Activated CD4-positive, alpha-beta T cell treated with anti-CD3 and anti-CD28 coated beads for 36 hours (primary cell): ENCODE measurements at regions of chr17 and their contacts with region 1.

Region 1: GRCh38 chr17:43388359-43389045 is 10.3 kb upstream of the ARL4D start:
- DNase-seq: peak; percentile 95
- ATAC-seq: peak; percentile 82
- H3K4me3 Mint-ChIP-seq: peak overlapping the region; percentile 80
- H3K27ac Mint-ChIP-seq: peak overlapping the region; percentile 98
- H3K4me1 Mint-ChIP-seq: peaks cover 16% of the 10 kb centered on the region
- H3K27me3 Mint-ChIP-seq: no peaks in the 10 kb centered on the region

Region 2: GRCh38 chr17:43024407-43025289 is 363.9 kb before region 1 on chr17 and contains the start of gene RND2:
- CTCF ChIA-PET with region 1: no interaction called
- POLR2A ChIA-PET with region 1: no interaction called
- intact Hi-C with region 1: loop called in 1 of 2 experiments (anchors 2 kb)
- DNase-seq: peak; percentile 89
- ATAC-seq: peak; percentile 68
- H3K4me3 Mint-ChIP-seq: peak within 1 kb of the TSS; percentile 78
- H3K27ac Mint-ChIP-seq: peak within 1 kb of the TSS; percentile 71
- H3K4me1 Mint-ChIP-seq: peaks cover 26% of the 10 kb centered on the region
- H3K27me3 Mint-ChIP-seq: no peaks in the 10 kb centered on the region
- total RNA-seq, gene RND2: 0.05 to 0.16 TPM

Region 3: GRCh38 chr17:43068570-43069367 is 319.7 kb before region 1 on chr17:
- CTCF ChIA-PET with region 1: no interaction called
- POLR2A ChIA-PET with region 1: no interaction called
- intact Hi-C with region 1: no loop called
- DNase-seq: no peak
- ATAC-seq: no peak
- H3K4me3 Mint-ChIP-seq: no peak overlapping the region
- H3K27ac Mint-ChIP-seq: no peak overlapping the region
- H3K4me1 Mint-ChIP-seq: no peaks in the 10 kb centered on the region
- H3K27me3 Mint-ChIP-seq: no peaks in the 10 kb centered on the region

Region 4: DNA sequence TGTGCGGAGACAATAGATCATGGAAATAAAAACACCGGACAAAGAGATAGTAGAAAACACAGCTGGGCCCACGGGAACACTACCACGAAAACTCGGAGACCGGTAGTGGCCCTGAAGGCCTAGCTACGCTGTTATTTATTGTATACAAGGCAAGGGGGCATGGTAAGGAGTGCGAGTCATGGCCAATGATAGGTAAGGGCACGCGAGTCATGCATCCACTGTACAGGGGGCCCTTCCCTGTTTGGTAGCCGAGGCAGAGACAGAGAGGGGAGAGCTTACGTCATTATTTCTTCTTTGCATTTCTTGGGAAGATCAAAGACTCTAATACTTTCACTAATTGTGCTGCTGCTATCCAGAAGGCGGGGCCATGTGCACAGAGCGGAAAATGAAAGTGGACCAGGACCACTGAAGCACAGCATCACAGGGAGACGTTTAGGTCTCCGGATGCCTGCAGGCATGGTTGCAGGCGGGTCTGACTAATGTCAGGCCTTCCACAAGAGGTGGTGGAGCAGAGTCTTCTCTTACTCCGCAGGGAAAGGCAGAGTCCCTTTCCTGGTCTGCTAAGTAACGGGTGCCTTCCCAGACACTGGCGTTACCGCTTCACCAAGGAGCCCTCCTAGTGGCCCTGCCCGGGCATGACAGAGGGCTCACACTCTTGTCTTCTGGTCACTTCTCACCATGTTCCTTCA is 64.2 kb before region 1 on chr17:
- CTCF ChIA-PET with region 1: no interaction called
- POLR2A ChIA-PET with region 1: no interaction called
- intact Hi-C with region 1: no loop called
- DNase-seq: no peak
- ATAC-seq: peak; percentile 47
- H3K4me3 Mint-ChIP-seq: no peak overlapping the region
- H3K27ac Mint-ChIP-seq: no peak overlapping the region
- H3K4me1 Mint-ChIP-seq: peaks cover 12% of the 10 kb centered on the region
- H3K27me3 Mint-ChIP-seq: peaks cover 15% of the 10 kb centered on the region

Region 5: GRCh38 chr17:43360739-43361505 is 27.6 kb before region 1 on chr17:
- CTCF ChIA-PET with region 1: interaction called, 6 read pairs
- POLR2A ChIA-PET with region 1: interaction called, 30 read pairs
- intact Hi-C with region 1: no loop called
- DNase-seq: peak; percentile 86
- ATAC-seq: peak; percentile 87
- H3K4me3 Mint-ChIP-seq: peak overlapping the region; percentile 90
- H3K27ac Mint-ChIP-seq: peak overlapping the region; percentile 100
- H3K4me1 Mint-ChIP-seq: peaks cover 31% of the 10 kb centered on the region
- H3K27me3 Mint-ChIP-seq: peaks cover 4% of the 10 kb centered on the region

Region 6: DNA sequence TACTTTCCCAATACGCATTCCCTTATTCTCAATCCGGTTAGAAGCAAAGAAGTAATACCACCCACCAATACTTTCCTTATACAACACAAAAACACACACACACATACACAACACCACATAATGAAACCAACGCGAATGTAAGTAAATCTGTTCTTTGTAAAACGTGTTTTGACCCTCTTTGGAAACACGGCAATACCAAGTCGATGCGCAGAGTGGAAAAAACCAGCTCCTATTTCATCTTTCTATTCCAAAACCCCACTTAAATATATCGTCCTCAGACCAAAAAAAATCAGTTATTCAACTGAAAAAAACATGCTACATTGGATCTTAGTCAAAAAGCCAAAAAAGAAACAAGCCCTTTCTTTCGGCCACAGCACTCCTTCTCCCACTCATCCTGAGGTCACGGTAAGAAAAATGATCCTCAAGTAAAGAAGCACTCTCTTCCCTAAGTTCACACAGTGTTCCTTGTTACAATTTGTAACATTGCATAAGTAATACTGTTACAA is 20.7 kb before region 1 on chr17:
- CTCF ChIA-PET with region 1: interaction called, 9 read pairs
- POLR2A ChIA-PET with region 1: interaction called, 148 read pairs
- intact Hi-C with region 1: loop called (anchors 1 kb)
- DNase-seq: peak; percentile 62
- ATAC-seq: peak; percentile 53
- H3K4me3 Mint-ChIP-seq: peak overlapping the region; percentile 85
- H3K27ac Mint-ChIP-seq: peak overlapping the region; percentile 100
- H3K4me1 Mint-ChIP-seq: peaks cover 57% of the 10 kb centered on the region
- H3K27me3 Mint-ChIP-seq: no peaks in the 10 kb centered on the region

Region 7: DNA sequence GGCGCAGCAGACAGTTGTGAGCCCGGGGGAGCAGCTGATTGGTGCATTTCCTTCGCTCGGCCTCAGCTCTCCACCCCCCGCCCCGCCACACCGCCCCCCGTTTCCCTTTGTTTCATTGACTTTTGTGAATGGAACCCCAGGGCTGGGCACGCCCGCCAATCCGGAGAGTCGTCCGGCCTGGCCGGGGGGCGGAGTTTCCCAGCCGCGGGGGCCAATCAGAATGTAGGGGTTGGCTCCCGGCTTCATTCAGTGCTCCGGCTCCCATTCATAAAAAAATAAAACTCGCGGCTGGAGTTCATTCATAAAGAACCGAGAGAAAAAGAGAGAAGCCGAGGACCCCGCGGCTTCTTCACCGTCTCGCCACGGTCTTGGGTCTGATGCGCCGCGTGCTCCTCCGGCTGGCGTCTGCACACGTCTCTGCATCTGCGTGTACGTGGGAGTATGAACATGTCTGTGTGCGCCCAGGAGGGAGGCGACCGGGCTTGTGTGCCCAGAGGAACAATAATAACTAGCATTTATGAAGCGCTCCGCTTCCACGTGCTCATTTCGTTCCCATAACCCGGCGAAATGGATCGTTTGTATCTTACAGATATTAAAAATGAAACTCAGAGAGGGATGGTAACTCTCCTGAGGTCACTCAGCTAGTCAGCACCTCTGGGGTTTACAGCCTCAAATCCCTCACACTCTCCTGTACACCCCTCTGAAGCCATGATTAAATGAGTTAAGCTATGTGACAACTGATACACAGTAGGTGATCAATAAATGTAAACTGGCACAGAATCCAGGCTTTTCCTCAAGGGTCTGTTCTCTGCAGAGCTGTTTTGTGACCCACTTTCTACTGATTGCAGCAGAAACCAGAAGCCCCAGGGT is 158.1 kb after region 1 on chr17 and contains the start of gene ETV4:
- CTCF ChIA-PET with region 1: interaction called, 3 read pairs
- POLR2A ChIA-PET with region 1: no interaction called
- intact Hi-C with region 1: loop called in 1 of 2 experiments (anchors 2 kb)
- DNase-seq: peak; percentile 96
- ATAC-seq: peak; percentile 94
- H3K4me3 Mint-ChIP-seq: peak within 1 kb of the TSS; percentile 75
- H3K27ac Mint-ChIP-seq: peak within 1 kb of the TSS; percentile 16
- H3K4me1 Mint-ChIP-seq: peaks cover 17% of the 10 kb centered on the region
- H3K27me3 Mint-ChIP-seq: peaks cover 49% of the 10 kb centered on the region
- total RNA-seq, gene ETV4: 2.9 to 3.3 TPM